ENCODE measurements at regions of chr14 and their contacts with region 1.

Region 1: GRCh38 chr14:89618811-89619551 is 201.9 kb upstream of the FOXN3 start:
- DNase-seq: peak; percentile 90
- ATAC-seq: peak; percentile 74
- H3K4me3 Mint-ChIP-seq: peak overlapping the region; percentile 99
- H3K27ac Mint-ChIP-seq: peak overlapping the region; percentile 99
- H3K4me1 Mint-ChIP-seq: peaks cover 59% of the 10 kb centered on the region
- H3K27me3 Mint-ChIP-seq: no peaks in the 10 kb centered on the region

Region 2: GRCh38 chr14:89416002-89416995 is 202.7 kb before region 1 on chr14:
- POLR2A ChIA-PET with region 1: interaction called, 14 read pairs
- DNase-seq: peak; percentile 100
- ATAC-seq: peak; percentile 76
- H3K4me3 Mint-ChIP-seq: peak overlapping the region; percentile 86
- H3K27ac Mint-ChIP-seq: peak overlapping the region; percentile 79
- H3K4me1 Mint-ChIP-seq: peaks cover 33% of the 10 kb centered on the region
- H3K27me3 Mint-ChIP-seq: no peaks in the 10 kb centered on the region

Region 3: GRCh38 chr14:89630101-89630829 is 11.3 kb after region 1 on chr14:
- POLR2A ChIA-PET with region 1: interaction called, 14 read pairs
- DNase-seq: no peak
- ATAC-seq: no peak
- H3K4me3 Mint-ChIP-seq: no peak overlapping the region
- H3K27ac Mint-ChIP-seq: peak overlapping the region; percentile 65
- H3K4me1 Mint-ChIP-seq: peaks cover 36% of the 10 kb centered on the region
- H3K27me3 Mint-ChIP-seq: no peaks in the 10 kb centered on the region

Region 4: GRCh38 chr14:89669193-89669592 is 50.2 kb after region 1 on chr14:
- POLR2A ChIA-PET with region 1: interaction called, 11 read pairs
- DNase-seq: peak; percentile 69
- ATAC-seq: peak; percentile 91
- H3K4me3 Mint-ChIP-seq: peak overlapping the region; percentile 55
- H3K27ac Mint-ChIP-seq: peak overlapping the region; percentile 66
- H3K4me1 Mint-ChIP-seq: peaks cover 29% of the 10 kb centered on the region
- H3K27me3 Mint-ChIP-seq: no peaks in the 10 kb centered on the region

Region 5: DNA sequence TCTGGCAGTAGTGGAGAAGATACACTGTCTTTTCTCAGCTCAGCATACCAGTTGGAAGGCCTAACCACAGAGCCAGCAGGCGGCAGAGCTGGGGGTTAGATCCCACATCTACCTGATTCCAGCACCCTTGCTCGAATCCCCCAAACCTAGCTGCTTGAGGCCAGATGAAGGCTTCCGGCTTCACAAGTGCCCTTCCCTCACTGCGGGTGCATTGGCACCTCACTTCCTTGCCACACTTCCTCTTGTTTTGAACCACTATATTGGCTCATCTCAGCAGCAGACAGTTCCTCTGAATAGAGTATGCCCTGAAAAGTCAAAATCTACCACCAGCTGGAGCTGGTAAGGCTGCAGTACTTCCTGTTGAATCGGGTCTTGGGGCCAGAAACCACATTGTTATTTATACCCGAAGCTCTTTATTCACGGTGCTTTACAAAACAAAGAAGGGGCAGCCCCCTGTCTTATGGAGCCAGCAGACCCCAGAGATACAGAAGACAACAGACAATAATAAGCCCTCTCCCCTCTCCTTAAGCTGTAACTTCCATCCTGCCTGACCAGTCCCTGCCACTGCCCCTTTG is 101.8 kb after region 1 on chr14:
- POLR2A ChIA-PET with region 1: interaction called, 40 read pairs
- DNase-seq: peak; percentile 73
- ATAC-seq: peak; percentile 85
- H3K4me3 Mint-ChIP-seq: peak overlapping the region; percentile 74
- H3K27ac Mint-ChIP-seq: peak overlapping the region; percentile 95
- H3K4me1 Mint-ChIP-seq: peaks cover 69% of the 10 kb centered on the region
- H3K27me3 Mint-ChIP-seq: no peaks in the 10 kb centered on the region